ENCODE measurements at regions of chr14 and their contacts with region 1.

Region 1: DNA sequence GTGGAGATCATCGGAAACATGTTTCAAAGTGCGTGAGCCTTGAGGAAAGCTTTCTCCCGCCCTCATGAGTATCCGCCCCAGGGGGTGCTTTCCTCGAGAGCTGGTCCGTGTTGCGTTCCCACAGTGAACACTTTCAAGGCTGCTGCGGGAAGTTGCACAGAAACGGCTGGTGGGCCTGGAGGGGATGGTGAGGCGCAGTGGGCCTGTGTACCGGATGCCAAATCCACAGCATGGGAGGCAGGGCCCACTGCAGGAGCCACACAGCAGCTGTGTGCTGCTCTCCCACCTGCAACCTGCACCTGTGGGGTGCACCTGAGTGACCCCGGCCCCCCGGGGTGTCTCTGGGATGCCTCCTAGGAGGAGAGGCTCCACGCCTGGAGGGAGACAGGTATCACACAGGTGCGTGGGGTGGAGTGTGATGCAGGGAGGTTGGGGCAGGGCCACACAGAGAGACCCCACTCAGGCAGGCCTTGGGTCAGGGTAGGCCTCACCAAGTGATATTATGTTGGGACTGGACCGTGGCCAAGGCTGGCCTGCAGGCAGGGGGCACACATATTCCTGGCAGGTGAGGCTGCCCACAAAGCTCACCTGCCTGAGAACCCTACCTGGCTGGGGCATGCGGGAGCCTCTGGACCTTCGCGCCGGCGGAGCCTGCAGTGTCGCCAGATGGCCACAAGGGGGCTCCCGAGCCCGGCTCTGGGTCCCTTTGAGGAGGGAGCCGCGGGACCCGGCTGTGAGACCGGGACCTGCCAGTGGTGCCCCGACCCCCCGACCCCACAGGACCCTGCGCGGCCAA is 11.2 kb downstream of the TMEM121 start:
- DNase-seq: peak; percentile 95
- H3K4me3 ChIP-seq: no peak overlapping the region; a peak in 1 of 4 replicates
- H3K27ac ChIP-seq: no peak overlapping the region
- H3K4me1 ChIP-seq: no peaks in the 10 kb centered on the region; a peak in 1 of 4 replicates
- H3K27me3 ChIP-seq: peaks cover 5% of the 10 kb centered on the region; the same call in 1 of the 2 replicates
- CTCF ChIP-seq: peak; percentile 83
- EP300 ChIP-seq: no peak
- RAD21 ChIP-seq: peak; percentile 52

Region 2: GRCh38 chr14:105448266-105448640 is 89.3 kb before region 1 on chr14:
- CTCF ChIA-PET with region 1: no interaction called
- POLR2A ChIA-PET with region 1: no interaction called
- DNase-seq: no peak
- H3K4me3 ChIP-seq: no peak overlapping the region
- H3K27ac ChIP-seq: no peak overlapping the region; a peak in 2 of 4 replicates
- H3K4me1 ChIP-seq: peaks cover 0 to 23% of the 10 kb centered on the region in 2 experiments; a peak in 1 of 4 replicates
- H3K27me3 ChIP-seq: no peaks in the 10 kb centered on the region
- CTCF ChIP-seq: no peak
- EP300 ChIP-seq: no peak
- RAD21 ChIP-seq: no peak

Region 3: GRCh38 chr14:105549481-105549880 is 11.9 kb after region 1 on chr14:
- CTCF ChIA-PET with region 1: interaction called, 21 read pairs
- POLR2A ChIA-PET with region 1: no interaction called
- DNase-seq: no peak
- H3K4me3 ChIP-seq: no peak overlapping the region
- H3K27ac ChIP-seq: no peak overlapping the region
- H3K4me1 ChIP-seq: no peaks in the 10 kb centered on the region
- H3K27me3 ChIP-seq: peaks cover 19% of the 10 kb centered on the region; the same call in 1 of the 2 replicates
- CTCF ChIP-seq: no peak
- EP300 ChIP-seq: no peak
- RAD21 ChIP-seq: no peak

Measured in SK-N-SH (cell line).